ENCODE measurements at regions of chr2 and their contacts with region 1.

Region 1: DNA sequence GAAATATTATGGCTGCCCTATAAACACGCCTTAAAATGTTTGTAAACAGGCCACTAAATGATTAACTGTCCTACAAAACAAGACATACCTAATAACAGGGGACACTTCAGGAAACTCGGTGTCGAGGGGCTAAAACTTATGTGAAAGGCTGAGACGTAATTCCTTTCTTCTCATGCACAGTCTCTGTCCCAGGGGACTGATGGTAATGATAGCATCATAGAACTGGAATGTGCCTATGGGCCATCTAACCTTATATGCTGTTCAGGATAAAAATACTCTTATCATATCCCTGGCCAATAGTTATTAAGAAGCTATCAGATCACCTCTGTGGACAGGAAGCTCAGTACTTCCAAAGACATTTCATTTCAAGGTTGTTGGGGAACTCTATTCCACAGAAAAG is 252.6 kb upstream of the RASGRP3 start:
- DNase-seq: no peak
- H3K4me3 ChIP-seq: no peak overlapping the region
- H3K27ac ChIP-seq: no peak overlapping the region
- H3K27me3 ChIP-seq: no peaks in the 10 kb centered on the region
- CTCF ChIP-seq: no peak

Region 2: GRCh38 chr2:33242845-33243244 is 19.0 kb after region 1 on chr2:
- CTCF ChIA-PET with region 1: no interaction called
- POLR2A ChIA-PET with region 1: interaction called, 10 read pairs
- DNase-seq: peak; percentile 26
- H3K4me3 ChIP-seq: no peak overlapping the region
- H3K27ac ChIP-seq: peak overlapping the region; percentile 43
- H3K27me3 ChIP-seq: no peaks in the 10 kb centered on the region
- CTCF ChIP-seq: no peak